H1 (cell line): ENCODE measurements at regions of chr4 and their contacts with region 1.

Region 1: DNA sequence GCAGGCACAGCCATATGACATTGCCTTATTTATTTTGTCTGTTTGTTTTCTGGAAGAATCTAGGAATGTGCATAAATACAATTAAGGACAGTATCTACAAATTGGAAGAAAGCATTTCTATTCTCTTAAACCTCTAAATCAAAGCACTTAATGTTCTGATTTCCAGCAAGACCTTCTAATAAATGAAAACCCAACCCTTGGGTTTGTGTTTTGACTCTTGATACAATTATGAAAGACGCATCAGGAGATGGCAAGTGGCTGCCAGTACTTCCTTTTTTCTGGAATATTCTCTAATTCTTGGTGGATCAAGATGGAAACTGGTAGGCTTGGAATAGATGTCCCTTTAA is 437 bp upstream of the CPE start:
- DNase-seq: no peak
- H3K4me3 ChIP-seq: peak overlapping the region; percentile 47 to 75 (median 61)
- H3K27ac ChIP-seq: no peak overlapping the region
- H3K4me1 ChIP-seq: peaks cover 0 to 8% (median 3%) of the 10 kb centered on the region in 4 experiments; a peak in 3 of 7 replicates
- H3K27me3 ChIP-seq: peaks cover 0 to 11% (median 10%) of the 10 kb centered on the region in 4 experiments; a peak in 4 of 7 replicates
- CTCF ChIP-seq: no peak
- EP300 ChIP-seq: no peak
- POLR2A ChIP-seq: no peak
- RAD21 ChIP-seq: no peak

Region 2: GRCh38 chr4:165152527-165152926 is 225.8 kb before region 1 on chr4:
- CTCF ChIA-PET with region 1: no interaction called
- POLR2A ChIA-PET with region 1: no interaction called
- DNase-seq: no peak
- H3K4me3 ChIP-seq: no peak overlapping the region
- H3K27ac ChIP-seq: no peak overlapping the region
- H3K4me1 ChIP-seq: no peaks in the 10 kb centered on the region
- H3K27me3 ChIP-seq: no peaks in the 10 kb centered on the region
- CTCF ChIP-seq: no peak
- EP300 ChIP-seq: no peak
- POLR2A ChIP-seq: no peak
- RAD21 ChIP-seq: no peak

Region 3: GRCh38 chr4:165204462-165204830 is 173.9 kb before region 1 on chr4:
- CTCF ChIA-PET with region 1: no interaction called
- POLR2A ChIA-PET with region 1: no interaction called
- DNase-seq: no peak
- H3K4me3 ChIP-seq: no peak overlapping the region
- H3K27ac ChIP-seq: no peak overlapping the region
- H3K4me1 ChIP-seq: peaks cover 4 to 11% (median 7%) of the 10 kb centered on the region in 4 experiments; a peak in 6 of 7 replicates
- H3K27me3 ChIP-seq: peaks cover 0 to 4% (median 2%) of the 10 kb centered on the region in 4 experiments; a peak in 3 of 7 replicates
- CTCF ChIP-seq: no peak
- EP300 ChIP-seq: no peak
- POLR2A ChIP-seq: no peak
- RAD21 ChIP-seq: no peak

Region 4: DNA sequence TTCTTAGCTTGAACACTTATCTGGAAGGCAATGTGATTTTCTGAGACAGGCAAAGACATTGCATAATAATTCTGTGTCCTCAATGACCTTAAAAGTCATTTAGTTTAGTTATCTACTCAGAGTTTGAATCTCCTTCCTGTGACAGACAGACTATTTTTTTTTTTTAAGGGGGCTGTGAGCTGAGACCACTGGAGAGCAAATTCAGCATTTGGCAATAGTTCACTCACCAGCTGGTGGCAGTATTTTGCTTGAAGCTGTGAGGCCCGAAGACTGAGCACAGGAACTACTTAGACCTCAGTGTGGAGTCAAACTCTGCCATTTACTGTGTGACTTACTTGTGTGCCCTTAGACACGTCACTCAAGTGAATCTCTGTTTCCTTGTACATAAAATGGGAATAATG is 22.5 kb before region 1 on chr4:
- CTCF ChIA-PET with region 1: interaction called, 18 read pairs
- POLR2A ChIA-PET with region 1: no interaction called
- DNase-seq: no peak
- H3K4me3 ChIP-seq: no peak overlapping the region
- H3K27ac ChIP-seq: no peak overlapping the region
- H3K4me1 ChIP-seq: no peaks in the 10 kb centered on the region
- H3K27me3 ChIP-seq: no peaks in the 10 kb centered on the region
- CTCF ChIP-seq: peak; percentile 61 to 83 (median 69)
- EP300 ChIP-seq: no peak
- POLR2A ChIP-seq: no peak
- RAD21 ChIP-seq: peak; percentile 72 to 80

Region 5: DNA sequence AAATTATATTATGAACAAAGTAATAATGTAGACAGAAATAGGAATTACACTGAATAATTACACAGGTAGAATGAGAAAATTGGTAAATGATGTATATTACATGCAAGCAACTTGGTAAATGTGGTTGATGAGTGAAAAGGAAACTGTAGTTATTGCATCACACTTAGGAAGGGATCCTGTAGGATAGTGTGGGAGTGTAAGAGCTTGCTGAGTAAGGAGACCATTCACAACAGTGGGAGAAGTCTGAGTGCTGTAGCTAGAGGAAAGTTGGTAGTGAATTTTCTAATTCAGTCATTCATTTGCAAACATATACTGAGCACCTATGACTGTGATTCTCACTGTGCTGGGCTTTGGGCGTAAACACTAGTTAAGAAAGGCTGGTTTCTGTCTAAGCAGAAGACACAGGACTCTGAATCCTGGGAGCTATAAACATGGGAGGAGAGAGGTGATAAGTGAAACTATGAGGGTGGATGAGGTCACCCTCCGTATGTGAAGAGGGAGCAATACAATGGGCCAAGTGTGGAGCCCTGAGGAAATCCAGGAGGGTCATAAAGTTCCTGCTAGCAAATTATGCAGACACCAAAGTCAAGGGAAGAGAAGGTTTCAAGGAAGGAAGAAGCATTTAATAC is 13.8 kb before region 1 on chr4:
- CTCF ChIA-PET with region 1: interaction called, 13 read pairs
- POLR2A ChIA-PET with region 1: no interaction called
- DNase-seq: no peak
- H3K4me3 ChIP-seq: no peak overlapping the region
- H3K27ac ChIP-seq: no peak overlapping the region
- H3K4me1 ChIP-seq: peaks cover 0 to 6% (median 2%) of the 10 kb centered on the region in 4 experiments; a peak in 2 of 7 replicates
- H3K27me3 ChIP-seq: no peaks in the 10 kb centered on the region
- CTCF ChIP-seq: no peak
- EP300 ChIP-seq: no peak
- POLR2A ChIP-seq: no peak
- RAD21 ChIP-seq: no peak